Body of pancreas (tissue), 4 donors: ENCODE measurements at regions of chr20 and their contacts with region 1.

Region 1: GRCh38 chr20:59087829-59088433 is 45.3 kb upstream of the PRELID3B start:
- DNase-seq: peak; percentile 78 to 87 (median 82)
- ATAC-seq: peak; percentile 73
- H3K4me3 ChIP-seq: no peak overlapping the region
- H3K27ac ChIP-seq: no peak overlapping the region
- H3K4me1 ChIP-seq: peaks cover 4% of the 10 kb centered on the region
- H3K27me3 ChIP-seq: no peaks in the 10 kb centered on the region
- CTCF ChIP-seq: peak; percentile 75 to 97 (median 79)
- POLR2A ChIP-seq: no peak

Region 2: DNA sequence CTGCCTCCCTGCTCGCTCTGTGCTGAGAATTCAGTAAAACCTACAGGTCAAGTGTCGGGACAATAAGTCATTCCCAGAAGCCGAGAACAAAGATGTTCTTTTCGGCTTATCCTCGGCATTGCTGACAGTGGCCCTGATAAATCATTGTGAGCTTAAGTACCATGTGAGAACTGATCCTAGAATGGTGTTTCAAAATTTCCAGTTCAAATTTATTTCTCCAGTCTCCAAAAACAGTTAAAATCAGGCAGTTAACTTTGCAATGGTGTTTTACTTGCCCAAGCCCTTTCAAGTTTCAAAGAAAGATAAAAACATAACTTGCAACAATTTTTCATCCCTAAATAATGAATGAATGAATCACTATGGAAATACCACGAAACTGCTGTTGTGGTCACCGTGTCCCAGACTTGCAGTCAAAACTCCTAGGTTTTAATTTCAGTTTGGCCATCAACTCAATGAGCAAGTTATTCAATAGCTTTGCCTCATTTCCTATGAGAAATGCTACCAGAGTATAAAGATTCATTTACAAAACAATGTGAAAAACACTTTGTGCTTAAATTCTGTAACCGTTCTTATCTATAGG is 60.1 kb before region 1 on chr20:
- intact Hi-C with region 1: no loop called
- DNase-seq: no peak
- ATAC-seq: no peak
- H3K4me3 ChIP-seq: no peak overlapping the region
- H3K27ac ChIP-seq: no peak overlapping the region
- H3K4me1 ChIP-seq: peaks cover 46% of the 10 kb centered on the region
- H3K27me3 ChIP-seq: no peaks in the 10 kb centered on the region
- CTCF ChIP-seq: no peak
- POLR2A ChIP-seq: no peak

Region 3: GRCh38 chr20:59149651-59150504 is 61.9 kb after region 1 on chr20:
- intact Hi-C with region 1: no loop called
- DNase-seq: peak in 1 of 4 donors; percentile 13
- ATAC-seq: no peak
- H3K4me3 ChIP-seq: no peak overlapping the region
- H3K27ac ChIP-seq: no peak overlapping the region
- H3K4me1 ChIP-seq: no peaks in the 10 kb centered on the region
- H3K27me3 ChIP-seq: no peaks in the 10 kb centered on the region
- CTCF ChIP-seq: no peak
- POLR2A ChIP-seq: no peak

Region 4: GRCh38 chr20:59403261-59403961 is 315.5 kb after region 1 on chr20:
- intact Hi-C with region 1: loop called (anchors 5 kb)
- DNase-seq: peak; percentile 52 to 70 (median 57)
- ATAC-seq: peak; percentile 69
- H3K4me3 ChIP-seq: no peak overlapping the region
- H3K27ac ChIP-seq: peak overlapping the region in 2 of 4 donors; percentile 2 to 20
- H3K4me1 ChIP-seq: peaks cover 18% of the 10 kb centered on the region
- H3K27me3 ChIP-seq: peaks cover 0 to 4% of the 10 kb centered on the region in 2 donors
- CTCF ChIP-seq: peak; percentile 86 to 99 (median 95)
- POLR2A ChIP-seq: no peak